Activated CD4-positive, alpha-beta T cell treated with anti-CD3 and anti-CD28 coated beads for 36 hours (primary cell): ENCODE measurements at regions of chr6 and their contacts with region 1.

Region 1: GRCh38 chr6:159693128-159693893 is at the start of gene SOD2:
- DNase-seq: peak; percentile 90
- ATAC-seq: peak; percentile 75
- H3K4me3 Mint-ChIP-seq: peak within 1 kb of the TSS; percentile 92
- H3K27ac Mint-ChIP-seq: peak within 1 kb of the TSS; percentile 93
- H3K4me1 Mint-ChIP-seq: peaks cover 44% of the 10 kb centered on the region
- H3K27me3 Mint-ChIP-seq: no peaks in the 10 kb centered on the region
- total RNA-seq, gene SOD2: 90.6 to 105 TPM

Region 2: GRCh38 chr6:159483259-159483658 is 210.1 kb before region 1 on chr6:
- CTCF ChIA-PET with region 1: no interaction called
- POLR2A ChIA-PET with region 1: no interaction called
- intact Hi-C with region 1: no loop called
- DNase-seq: no peak
- ATAC-seq: no peak
- H3K4me3 Mint-ChIP-seq: no peak overlapping the region
- H3K27ac Mint-ChIP-seq: no peak overlapping the region
- H3K4me1 Mint-ChIP-seq: no peaks in the 10 kb centered on the region
- H3K27me3 Mint-ChIP-seq: peaks cover 31% of the 10 kb centered on the region

Region 3: DNA sequence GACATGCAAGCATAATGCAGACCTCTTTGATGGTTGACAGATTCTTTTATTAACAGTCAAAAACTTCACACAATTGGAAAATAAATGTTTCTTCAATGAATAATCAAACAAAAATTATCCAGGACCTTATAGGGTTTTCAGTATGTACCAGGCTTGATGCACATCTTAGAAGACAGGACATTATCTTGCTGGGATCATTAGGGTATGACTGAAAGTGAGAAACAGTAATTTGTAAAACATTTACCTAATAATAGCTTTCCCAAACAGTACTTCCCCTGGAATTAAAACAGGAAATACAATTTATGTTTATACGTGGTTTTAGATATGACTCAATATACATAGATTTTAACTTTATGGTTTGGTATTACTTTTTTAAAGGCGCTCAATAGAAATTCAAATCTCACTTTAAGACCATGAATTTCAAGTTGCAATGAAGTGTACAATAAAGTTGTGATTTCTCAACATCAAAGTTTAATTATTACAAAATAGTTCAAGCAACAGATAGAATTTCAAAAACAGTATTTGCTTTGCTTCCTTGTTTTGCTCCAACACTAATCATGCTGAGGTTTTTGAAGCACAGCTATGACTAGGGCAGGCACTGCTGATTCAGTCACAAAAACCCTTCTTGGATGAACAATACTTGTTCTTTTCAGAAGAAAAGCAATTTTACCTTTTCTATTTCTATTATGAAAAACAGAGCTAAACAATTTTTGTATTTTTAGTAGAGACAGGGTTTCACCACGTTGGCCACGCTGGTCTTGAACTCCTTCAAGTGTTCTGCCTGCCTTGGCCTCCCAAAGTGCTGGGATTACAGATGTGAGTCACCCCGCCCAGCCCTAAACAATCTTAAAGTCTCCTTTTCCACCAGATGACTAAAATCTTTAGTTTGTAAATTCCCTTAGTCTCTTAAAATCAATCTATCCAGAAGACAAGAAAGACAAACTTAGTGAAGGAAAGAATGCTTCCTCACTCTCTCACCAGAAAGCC is 13.9 kb before region 1 on chr6:
- CTCF ChIA-PET with region 1: interaction called, 19 read pairs
- POLR2A ChIA-PET with region 1: interaction called, 6 read pairs
- intact Hi-C with region 1: no loop called
- DNase-seq: peak; percentile 67
- ATAC-seq: peak; percentile 75
- H3K4me3 Mint-ChIP-seq: no peak overlapping the region
- H3K27ac Mint-ChIP-seq: peak overlapping the region; percentile 73
- H3K4me1 Mint-ChIP-seq: peaks cover 37% of the 10 kb centered on the region
- H3K27me3 Mint-ChIP-seq: no peaks in the 10 kb centered on the region

Region 4: GRCh38 chr6:159761873-159762680 is 68.8 kb after region 1 on chr6 and contains the start of gene ACAT2:
- CTCF ChIA-PET with region 1: interaction called, 3 read pairs
- POLR2A ChIA-PET with region 1: interaction called, 3 read pairs
- intact Hi-C with region 1: loop called (anchors 1 to 2 kb)
- DNase-seq: peak; percentile 96
- ATAC-seq: peak; percentile 97
- H3K4me3 Mint-ChIP-seq: peak within 1 kb of the TSS; percentile 95
- H3K27ac Mint-ChIP-seq: peak within 1 kb of the TSS; percentile 95
- H3K4me1 Mint-ChIP-seq: peaks cover 27% of the 10 kb centered on the region
- H3K27me3 Mint-ChIP-seq: no peaks in the 10 kb centered on the region
- total RNA-seq, gene ACAT2: 55.0 to 82.1 TPM

Region 5: GRCh38 chr6:159929819-159930218 is 236.5 kb after region 1 on chr6:
- CTCF ChIA-PET with region 1: interaction called, 3 read pairs
- POLR2A ChIA-PET with region 1: no interaction called
- intact Hi-C with region 1: loop called (anchors 2 to 10 kb)
- DNase-seq: peak; percentile 66
- ATAC-seq: peak; percentile 24
- H3K4me3 Mint-ChIP-seq: no peak overlapping the region
- H3K27ac Mint-ChIP-seq: peak overlapping the region; percentile 88
- H3K4me1 Mint-ChIP-seq: peaks cover 34% of the 10 kb centered on the region
- H3K27me3 Mint-ChIP-seq: peaks cover 4% of the 10 kb centered on the region

Region 6: GRCh38 chr6:160102956-160103824 is 409.9 kb after region 1 on chr6:
- CTCF ChIA-PET with region 1: no interaction called
- POLR2A ChIA-PET with region 1: no interaction called
- intact Hi-C with region 1: loop called in 1 of 2 experiments (anchors 10 kb)
- DNase-seq: peak; percentile 51
- ATAC-seq: peak; percentile 60
- H3K4me3 Mint-ChIP-seq: no peak overlapping the region
- H3K27ac Mint-ChIP-seq: no peak overlapping the region
- H3K4me1 Mint-ChIP-seq: peaks cover 12% of the 10 kb centered on the region
- H3K27me3 Mint-ChIP-seq: no peaks in the 10 kb centered on the region

Region 7: DNA sequence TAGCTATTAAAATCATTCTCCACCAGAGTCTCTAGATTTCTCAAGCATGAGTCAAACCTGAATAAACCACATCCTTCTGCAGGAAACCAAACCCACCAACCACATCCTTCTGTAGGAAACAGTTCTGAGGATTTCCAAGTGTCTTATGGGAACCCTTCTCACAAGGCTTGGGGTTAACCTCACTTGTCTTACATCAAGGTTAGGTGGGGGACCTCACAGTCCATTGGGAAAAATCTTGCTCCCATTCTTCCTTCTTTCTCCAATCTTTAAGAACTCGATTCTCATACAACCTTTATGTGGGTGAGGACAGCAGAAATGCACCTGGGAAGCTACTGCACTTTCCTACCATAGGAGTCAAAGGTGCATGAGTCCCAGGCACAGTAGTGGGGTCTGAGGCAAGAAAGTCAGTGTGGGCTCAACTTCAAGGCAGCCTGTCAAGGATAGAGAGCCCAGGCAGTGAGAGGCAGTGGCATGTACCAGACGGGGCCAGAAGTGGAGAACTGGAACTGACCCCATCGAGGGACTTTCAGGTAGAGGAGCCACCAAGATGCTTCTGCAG is 769.3 kb after region 1 on chr6:
- CTCF ChIA-PET with region 1: no interaction called
- POLR2A ChIA-PET with region 1: no interaction called
- intact Hi-C with region 1: loop called (anchors 5 to 10 kb)
- DNase-seq: peak; percentile 63
- ATAC-seq: peak; percentile 80
- H3K4me3 Mint-ChIP-seq: peak overlapping the region; percentile 17
- H3K27ac Mint-ChIP-seq: peak overlapping the region; percentile 65
- H3K4me1 Mint-ChIP-seq: peaks cover 60% of the 10 kb centered on the region
- H3K27me3 Mint-ChIP-seq: peaks cover 34% of the 10 kb centered on the region